HepG2 (cell line): ENCODE measurements at regions of chr13 and their contacts with region 1.

Region 1: DNA sequence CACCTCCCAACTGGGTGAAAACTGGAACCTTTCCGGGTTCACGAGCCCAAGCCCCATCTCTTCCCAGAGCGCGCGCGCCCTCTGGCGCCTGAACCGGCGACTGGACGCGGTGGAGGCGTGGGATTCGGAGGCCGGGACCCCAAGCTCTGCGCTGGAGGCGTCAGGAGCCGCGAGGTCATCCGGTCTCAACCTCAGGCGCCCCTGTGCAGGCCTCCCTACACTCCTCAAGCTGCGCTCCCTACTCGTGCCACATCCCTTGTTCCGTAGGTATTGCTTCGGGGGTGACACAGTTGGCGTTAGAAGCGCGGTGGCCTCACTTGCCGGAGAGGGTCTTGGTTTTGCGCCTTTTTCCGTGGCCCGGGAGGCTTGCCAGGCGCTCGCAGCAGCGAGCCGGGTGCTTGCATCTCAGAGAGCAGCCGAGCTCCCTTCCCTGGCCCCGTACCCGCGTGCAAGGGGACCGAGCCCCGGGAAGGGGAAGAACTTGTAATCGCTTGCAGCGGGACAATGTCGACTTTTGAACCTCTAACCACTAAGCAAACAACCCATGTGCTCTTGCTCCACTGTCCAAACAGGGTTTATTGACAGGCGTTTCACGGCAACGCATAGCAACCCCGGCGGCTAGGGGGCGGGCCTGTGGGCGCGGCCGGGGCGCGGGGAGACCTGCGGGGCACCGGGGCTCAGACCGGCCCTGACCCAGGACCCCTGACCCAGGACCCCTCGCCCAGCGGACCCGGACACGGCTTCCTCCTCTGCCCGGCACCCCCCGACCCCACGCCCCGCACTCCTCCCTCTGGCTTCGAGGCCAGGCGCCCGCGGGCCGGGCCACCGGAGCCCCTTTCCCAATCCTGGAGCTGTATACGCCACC is 8.5 kb downstream of the CDX2 start:
- DNase-seq: peak; percentile 97
- ATAC-seq: peak; percentile 90
- H3K4me3 ChIP-seq: peak overlapping the region; percentile 55 to 77 (median 77)
- H3K27ac ChIP-seq: peak overlapping the region; percentile 98
- H3K4me1 ChIP-seq: peaks cover 61% of the 10 kb centered on the region
- H3K27me3 ChIP-seq: peaks cover 3 to 10% of the 10 kb centered on the region in 2 experiments; a peak in 2 of 5 replicates
- CTCF ChIP-seq: peak; percentile 90
- EP300 ChIP-seq: peak; percentile 87 to 94
- POLR2A ChIP-seq: peak in 1 of 2 experiments; percentile 94; a peak in 2 of 4 replicates
- RAD21 ChIP-seq: peak; percentile 81

Region 2: GRCh38 chr13:27905650-27906049 is 54.9 kb before region 1 on chr13:
- CTCF ChIA-PET with region 1: no interaction called
- POLR2A ChIA-PET with region 1: no interaction called
- in situ Hi-C with region 1: no loop called
- intact Hi-C with region 1: no loop called
- DNase-seq: no peak
- ATAC-seq: no peak
- H3K4me3 ChIP-seq: no peak overlapping the region
- H3K27ac ChIP-seq: no peak overlapping the region
- H3K4me1 ChIP-seq: peaks cover 9% of the 10 kb centered on the region
- H3K27me3 ChIP-seq: peaks cover 0 to 1% of the 10 kb centered on the region in 2 experiments; a peak in 1 of 5 replicates
- CTCF ChIP-seq: no peak
- EP300 ChIP-seq: no peak
- POLR2A ChIP-seq: no peak
- RAD21 ChIP-seq: no peak

Region 3: GRCh38 chr13:27919934-27920676 is 40.5 kb before region 1 on chr13 and contains the start of gene PDX1:
- CTCF ChIA-PET with region 1: no interaction called
- POLR2A ChIA-PET with region 1: interaction called, 6 read pairs
- in situ Hi-C with region 1: no loop called
- intact Hi-C with region 1: loop called (anchors 2 kb)
- DNase-seq: no peak
- ATAC-seq: peak; percentile 88
- H3K4me3 ChIP-seq: peak within 1 kb of the TSS; percentile 35 to 68 (median 45)
- H3K27ac ChIP-seq: no peak within 1 kb of the TSS
- H3K4me1 ChIP-seq: peaks cover 35% of the 10 kb centered on the region
- H3K27me3 ChIP-seq: peaks cover 8 to 50% of the 10 kb centered on the region in 2 experiments
- CTCF ChIP-seq: no peak
- EP300 ChIP-seq: no peak
- POLR2A ChIP-seq: no peak
- RAD21 ChIP-seq: no peak
- total RNA-seq, gene PDX1: 0.07 TPM in 1 of 2 replicates, not detected in the other

Region 4: DNA sequence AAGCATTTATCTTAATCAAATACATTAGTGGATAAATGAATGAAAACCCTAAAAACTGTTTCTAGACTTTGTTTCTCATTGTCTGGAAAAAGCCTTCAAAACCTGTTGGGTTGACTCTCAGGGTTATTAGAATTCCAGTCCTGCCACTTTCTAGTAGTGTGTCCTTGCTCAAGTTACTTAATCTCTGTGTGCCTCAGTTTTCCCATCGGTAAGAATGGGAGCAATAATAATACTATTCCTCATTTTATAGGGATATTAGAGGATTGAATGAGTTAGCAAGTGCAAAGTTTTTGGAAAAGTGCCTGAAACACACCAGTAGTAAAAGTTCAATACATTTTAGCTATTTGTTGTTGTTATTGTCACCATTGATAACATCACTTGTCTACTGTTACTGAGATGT is 25.0 kb after region 1 on chr13:
- CTCF ChIA-PET with region 1: no interaction called
- POLR2A ChIA-PET with region 1: interaction called, 6 read pairs
- in situ Hi-C with region 1: no loop called
- intact Hi-C with region 1: loop called (anchors 2 kb)
- DNase-seq: no peak
- ATAC-seq: no peak
- H3K4me3 ChIP-seq: no peak overlapping the region
- H3K27ac ChIP-seq: no peak overlapping the region
- H3K4me1 ChIP-seq: peaks cover 9% of the 10 kb centered on the region
- H3K27me3 ChIP-seq: peaks cover 7 to 14% of the 10 kb centered on the region in 2 experiments
- CTCF ChIP-seq: no peak
- EP300 ChIP-seq: no peak
- POLR2A ChIP-seq: no peak
- RAD21 ChIP-seq: no peak

Region 5: DNA sequence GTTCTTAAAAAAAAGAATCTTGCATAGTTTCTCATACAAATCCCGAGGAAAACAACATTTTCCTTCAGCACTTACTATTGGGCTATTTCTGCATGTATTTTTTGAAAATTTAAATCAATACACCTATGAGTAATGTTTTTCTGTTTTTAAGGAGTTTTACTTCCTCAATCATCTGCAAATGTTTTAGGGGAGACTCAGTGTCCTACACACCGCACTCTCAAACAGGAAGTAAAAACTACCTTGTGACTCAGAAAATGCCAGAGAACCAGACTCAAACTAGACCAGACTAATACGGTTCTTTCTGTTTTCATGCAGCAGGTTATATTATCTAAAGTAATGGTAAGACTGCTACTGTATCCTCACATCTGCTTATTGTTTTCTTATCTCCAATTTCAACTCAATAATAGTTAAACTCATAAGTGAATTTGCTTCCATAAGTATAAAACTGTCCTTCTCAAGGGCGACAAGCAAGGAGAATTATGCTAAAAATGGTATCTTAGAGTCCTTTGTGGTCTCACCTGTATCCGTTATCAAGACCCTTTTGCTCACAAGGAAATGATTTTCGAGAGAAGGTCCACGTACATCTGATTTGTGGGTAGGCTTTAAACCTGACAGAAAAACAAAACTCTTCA is 87.3 kb after region 1 on chr13:
- CTCF ChIA-PET with region 1: no interaction called
- POLR2A ChIA-PET with region 1: no interaction called
- in situ Hi-C with region 1: no loop called
- intact Hi-C with region 1: no loop called
- DNase-seq: no peak
- ATAC-seq: no peak
- H3K4me3 ChIP-seq: no peak overlapping the region
- H3K27ac ChIP-seq: no peak overlapping the region
- H3K4me1 ChIP-seq: no peaks in the 10 kb centered on the region
- H3K27me3 ChIP-seq: no peaks in the 10 kb centered on the region
- CTCF ChIP-seq: no peak
- EP300 ChIP-seq: no peak
- POLR2A ChIP-seq: no peak
- RAD21 ChIP-seq: no peak